AG04450 (cell line): ENCODE measurements at regions of chr4 and their contacts with region 1.

Region 1: DNA sequence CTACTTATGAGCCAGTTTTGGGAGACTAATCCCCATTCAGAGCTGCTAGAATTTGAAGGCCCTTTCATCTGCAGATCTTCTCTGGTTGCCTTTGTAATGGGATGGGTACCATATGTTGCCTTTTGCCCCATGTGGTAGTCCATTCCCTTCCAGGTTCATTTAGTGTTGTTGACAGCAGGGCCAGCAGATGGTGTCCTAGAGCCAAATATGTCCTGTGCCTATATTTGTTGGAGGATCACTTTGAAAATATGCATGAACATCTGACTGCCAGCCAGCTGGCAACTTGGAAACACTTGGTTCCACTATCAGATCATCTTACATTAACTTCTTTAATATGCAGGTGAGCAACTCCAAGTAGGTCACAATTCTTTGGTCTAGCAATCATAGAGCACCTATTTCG is 30.4 kb downstream of the CFAP299 start:
- DNase-seq: peak; percentile 62
- H3K4me3 ChIP-seq: no peak overlapping the region
- H3K27ac ChIP-seq: no peak overlapping the region
- H3K27me3 ChIP-seq: no peaks in the 10 kb centered on the region
- CTCF ChIP-seq: peak; percentile 86

Region 2: GRCh38 chr4:80221161-80221560 is 144.8 kb before region 1 on chr4:
- CTCF ChIA-PET with region 1: interaction called, 11 read pairs
- POLR2A ChIA-PET with region 1: no interaction called
- DNase-seq: no peak
- H3K4me3 ChIP-seq: no peak overlapping the region
- H3K27ac ChIP-seq: no peak overlapping the region
- H3K27me3 ChIP-seq: no peaks in the 10 kb centered on the region
- CTCF ChIP-seq: peak; percentile 56

Region 3: GRCh38 chr4:80980239-80980638 is 614.3 kb after region 1 on chr4:
- CTCF ChIA-PET with region 1: interaction called, 231 read pairs
- POLR2A ChIA-PET with region 1: no interaction called
- DNase-seq: no peak
- H3K4me3 ChIP-seq: no peak overlapping the region
- H3K27ac ChIP-seq: no peak overlapping the region
- H3K27me3 ChIP-seq: no peaks in the 10 kb centered on the region
- CTCF ChIP-seq: no peak

Region 4: DNA sequence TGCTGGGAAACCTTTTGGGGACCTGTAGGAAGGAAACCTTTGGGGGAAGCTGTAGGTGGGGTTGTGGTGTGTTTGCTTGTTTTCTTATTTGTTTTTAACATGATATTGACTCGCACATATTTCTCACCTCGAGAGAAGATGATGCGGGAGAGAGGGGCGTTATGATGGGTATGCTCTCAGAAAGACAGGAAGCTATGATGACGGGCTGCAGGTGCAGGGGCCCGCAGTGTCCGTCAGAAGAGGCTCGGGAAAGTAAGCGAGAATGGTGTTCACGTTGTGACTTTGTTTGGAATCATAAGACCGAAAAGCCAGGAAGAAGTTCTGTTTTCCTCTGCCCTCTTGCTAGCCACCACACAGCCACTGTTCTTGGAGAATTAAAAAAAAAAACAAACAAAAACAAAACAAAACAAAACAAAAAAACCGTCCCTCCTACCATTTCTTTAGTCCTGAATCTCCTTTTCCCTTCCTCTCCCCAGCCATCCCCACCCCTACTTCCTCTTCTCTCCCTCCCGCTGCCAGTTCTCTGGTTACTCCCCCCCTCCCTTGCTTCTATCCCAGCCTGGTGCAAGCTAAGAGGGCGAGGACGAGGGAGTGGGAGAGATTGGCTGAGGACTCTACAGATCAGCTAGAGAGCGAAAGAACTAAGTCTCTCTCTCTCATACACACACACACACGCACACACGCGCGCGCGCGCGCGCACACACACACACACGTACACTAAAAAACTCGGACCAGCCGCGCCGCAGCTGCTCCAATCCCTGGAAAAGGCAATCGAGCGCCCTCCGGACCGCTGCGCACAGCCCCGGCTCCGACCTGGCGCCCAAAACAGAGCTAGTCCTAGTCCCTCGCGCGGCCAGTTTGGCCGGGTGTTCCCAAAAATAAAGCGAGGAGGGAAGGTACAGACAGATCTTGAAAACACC is 664.4 kb after region 1 on chr4 and contains the start of gene BMP3:
- CTCF ChIA-PET with region 1: interaction called, 111 read pairs
- POLR2A ChIA-PET with region 1: no interaction called
- DNase-seq: no peak
- H3K4me3 ChIP-seq: peak within 1 kb of the TSS; percentile 42
- H3K27ac ChIP-seq: no peak within 1 kb of the TSS
- H3K27me3 ChIP-seq: peaks cover 54% of the 10 kb centered on the region
- CTCF ChIP-seq: no peak
- polyA plus RNA-seq, gene BMP3: 0.11 and 0.15 TPM in 2 replicates

Region 5: GRCh38 chr4:81052119-81053068 is 686.5 kb after region 1 on chr4:
- CTCF ChIA-PET with region 1: interaction called, 80 read pairs
- POLR2A ChIA-PET with region 1: no interaction called
- DNase-seq: peak; percentile 34
- H3K4me3 ChIP-seq: no peak overlapping the region
- H3K27ac ChIP-seq: no peak overlapping the region
- H3K27me3 ChIP-seq: peaks cover 16% of the 10 kb centered on the region
- CTCF ChIP-seq: peak; percentile 84